Activated B cell treated with CpG ODN at 0.5 μM for 24 hours (primary cell): ENCODE measurements at regions of chrX and their contacts with region 1.

Region 1: GRCh38 chrX:153724252-153725040 is at the starts of genes ABCD1 and BCAP31:
- DNase-seq: peak; percentile 84
- ATAC-seq: peak; percentile 78
- H3K4me3 Mint-ChIP-seq: peak within 1 kb of the TSS; percentile 85
- H3K27ac Mint-ChIP-seq: peak within 1 kb of the TSS; percentile 86
- H3K4me1 Mint-ChIP-seq: peaks cover 48% of the 10 kb centered on the region
- H3K27me3 Mint-ChIP-seq: no peaks in the 10 kb centered on the region
- CTCF ChIP-seq: no peak
- total RNA-seq, gene ABCD1: 2.6 and 2.8 TPM in 2 replicates
- total RNA-seq, gene BCAP31: 90.5 and 90.7 TPM in 2 replicates

Region 2: DNA sequence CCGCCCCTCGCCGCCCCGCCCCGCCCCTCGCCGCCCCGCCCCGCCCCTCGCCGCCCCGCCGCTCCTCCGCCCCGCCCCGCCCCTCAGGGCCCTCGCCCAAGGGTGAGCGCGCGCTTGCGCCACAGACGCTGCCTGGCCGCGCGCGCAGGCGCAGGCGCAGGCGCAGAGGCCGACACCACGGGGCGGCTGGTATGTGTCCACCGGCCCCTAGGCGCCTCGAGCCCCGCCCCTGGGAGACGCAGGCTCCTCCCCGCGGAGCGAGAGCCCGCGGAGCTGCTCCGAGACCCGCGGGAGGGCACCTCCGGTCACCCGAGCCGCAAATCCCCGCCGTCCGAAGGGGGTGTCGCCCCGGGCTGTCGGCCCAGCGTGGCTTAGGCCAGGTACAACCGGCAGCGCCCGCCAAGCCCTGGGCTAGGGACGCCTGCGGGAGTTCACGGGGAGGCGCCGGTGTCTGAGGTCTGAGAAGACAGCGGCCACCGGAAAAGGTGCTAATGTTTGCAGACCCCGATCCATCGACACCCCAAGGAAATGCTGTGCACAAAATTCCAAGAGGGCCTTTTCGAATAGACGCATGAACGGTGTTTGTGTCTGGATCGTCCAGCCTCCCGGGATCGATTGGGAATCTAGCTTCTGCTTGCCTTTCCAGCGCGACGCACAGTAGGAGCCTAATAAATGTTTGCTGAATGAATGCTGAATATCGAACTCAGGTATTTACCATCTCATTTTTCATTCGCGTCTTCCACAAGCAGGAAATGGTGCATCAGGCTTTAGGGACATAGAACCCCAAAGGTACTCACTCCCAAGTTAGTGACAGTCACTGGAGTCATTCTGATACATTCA is 125.0 kb before region 1 on chrX:
- CTCF ChIA-PET with region 1: no interaction called
- POLR2A ChIA-PET with region 1: no interaction called
- intact Hi-C with region 1: loop called (anchors 1 kb)
- DNase-seq: peak; percentile 82
- ATAC-seq: peak; percentile 84
- H3K4me3 Mint-ChIP-seq: peak overlapping the region; percentile 77
- H3K27ac Mint-ChIP-seq: no peak overlapping the region
- H3K4me1 Mint-ChIP-seq: peaks cover 36% of the 10 kb centered on the region
- H3K27me3 Mint-ChIP-seq: no peaks in the 10 kb centered on the region
- CTCF ChIP-seq: no peak

Region 3: GRCh38 chrX:153735274-153735673 is 10.8 kb after region 1 on chrX:
- CTCF ChIA-PET with region 1: no interaction called
- POLR2A ChIA-PET with region 1: interaction called, 3 read pairs
- intact Hi-C with region 1: loop called (anchors 1 kb)
- DNase-seq: no peak
- ATAC-seq: peak; percentile 79
- H3K4me3 Mint-ChIP-seq: no peak overlapping the region
- H3K27ac Mint-ChIP-seq: no peak overlapping the region
- H3K4me1 Mint-ChIP-seq: peaks cover 27% of the 10 kb centered on the region
- H3K27me3 Mint-ChIP-seq: no peaks in the 10 kb centered on the region
- CTCF ChIP-seq: no peak

Region 4: DNA sequence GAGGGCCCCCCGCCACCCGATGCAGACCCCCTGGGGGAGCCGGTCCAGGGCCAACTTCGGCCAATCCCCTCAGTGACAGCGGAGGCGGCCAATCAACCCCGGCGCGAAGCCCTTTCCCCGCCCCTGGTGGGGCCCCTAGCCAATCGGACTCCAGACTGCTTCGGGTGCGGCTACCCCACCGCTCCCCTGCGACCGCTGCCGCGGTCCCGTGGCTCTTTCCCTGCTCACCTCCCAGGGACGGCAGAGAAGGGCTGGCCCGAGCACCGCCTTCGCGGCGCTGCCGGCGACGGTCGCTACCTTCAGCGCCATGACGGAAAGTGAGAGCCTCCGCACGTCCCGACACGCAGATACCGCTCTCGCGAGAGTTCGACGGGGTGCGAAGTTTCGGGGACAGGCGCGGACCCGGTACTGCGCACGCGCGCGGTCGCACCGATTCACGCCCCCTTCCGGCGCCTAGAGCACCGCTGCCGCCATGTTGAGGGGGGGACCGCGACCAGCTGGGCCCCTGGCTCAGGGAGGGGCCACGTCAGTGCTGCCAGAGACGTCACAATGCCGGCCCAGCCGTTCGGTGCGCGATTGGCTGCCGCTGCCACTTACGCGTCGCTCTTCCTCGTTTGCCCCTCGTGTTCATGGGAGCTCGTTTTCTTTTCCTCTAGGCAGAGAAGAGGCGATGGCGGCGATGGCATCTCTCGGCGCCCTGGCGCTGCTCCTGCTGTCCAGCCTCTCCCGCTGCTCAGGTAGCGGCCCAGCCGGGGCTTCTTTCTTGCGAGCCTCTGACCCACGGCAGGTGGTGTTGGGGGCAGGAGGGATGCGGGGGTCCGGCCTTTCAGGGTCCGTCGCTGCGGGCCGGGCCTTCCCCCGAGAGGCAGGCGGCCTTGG is 69.8 kb after region 1 on chrX and contains the starts of genes IDH3G and SSR4:
- CTCF ChIA-PET with region 1: no interaction called
- POLR2A ChIA-PET with region 1: no interaction called
- intact Hi-C with region 1: loop called (anchors 1 kb)
- DNase-seq: peak; percentile 84
- ATAC-seq: peak; percentile 91
- H3K4me3 Mint-ChIP-seq: peak within 1 kb of the TSS; percentile 94
- H3K27ac Mint-ChIP-seq: peak within 1 kb of the TSS; percentile 92
- H3K4me1 Mint-ChIP-seq: peaks cover 19% of the 10 kb centered on the region
- H3K27me3 Mint-ChIP-seq: no peaks in the 10 kb centered on the region
- CTCF ChIP-seq: no peak
- total RNA-seq, gene IDH3G: 58.5 and 60.3 TPM in 2 replicates
- total RNA-seq, gene SSR4: 160 and 175 TPM in 2 replicates

Region 5: DNA sequence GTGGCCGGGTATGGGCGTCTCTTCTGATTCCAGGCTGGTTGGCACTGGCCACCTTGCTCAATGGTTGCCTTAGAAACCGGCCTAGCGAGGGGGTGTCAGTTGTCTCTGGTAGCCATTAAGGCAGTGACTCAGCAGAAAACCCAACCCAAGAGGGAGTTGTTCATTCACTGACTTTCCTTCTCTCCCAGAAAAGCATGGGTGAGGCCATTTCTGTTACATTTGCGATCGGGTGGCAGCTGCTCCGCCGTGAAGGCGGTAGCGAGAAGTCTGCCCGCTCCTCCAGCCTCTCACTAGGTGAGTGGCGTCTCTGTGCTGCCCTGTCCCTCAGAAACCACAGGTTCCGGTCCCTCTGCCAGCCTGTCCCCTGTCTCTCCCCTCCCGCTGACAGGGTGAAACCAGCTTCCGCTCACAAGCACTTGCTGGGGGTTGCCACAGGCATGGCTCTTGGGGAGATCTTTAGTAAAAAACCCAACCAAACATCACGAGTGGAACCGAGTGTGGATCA is 277.8 kb after region 1 on chrX:
- CTCF ChIA-PET with region 1: no interaction called
- POLR2A ChIA-PET with region 1: no interaction called
- intact Hi-C with region 1: no loop called
- DNase-seq: peak; percentile 27
- ATAC-seq: peak; percentile 73
- H3K4me3 Mint-ChIP-seq: peak overlapping the region; percentile 77
- H3K27ac Mint-ChIP-seq: peak overlapping the region; percentile 85
- H3K4me1 Mint-ChIP-seq: peaks cover 49% of the 10 kb centered on the region
- H3K27me3 Mint-ChIP-seq: no peaks in the 10 kb centered on the region
- CTCF ChIP-seq: no peak

Region 6: DNA sequence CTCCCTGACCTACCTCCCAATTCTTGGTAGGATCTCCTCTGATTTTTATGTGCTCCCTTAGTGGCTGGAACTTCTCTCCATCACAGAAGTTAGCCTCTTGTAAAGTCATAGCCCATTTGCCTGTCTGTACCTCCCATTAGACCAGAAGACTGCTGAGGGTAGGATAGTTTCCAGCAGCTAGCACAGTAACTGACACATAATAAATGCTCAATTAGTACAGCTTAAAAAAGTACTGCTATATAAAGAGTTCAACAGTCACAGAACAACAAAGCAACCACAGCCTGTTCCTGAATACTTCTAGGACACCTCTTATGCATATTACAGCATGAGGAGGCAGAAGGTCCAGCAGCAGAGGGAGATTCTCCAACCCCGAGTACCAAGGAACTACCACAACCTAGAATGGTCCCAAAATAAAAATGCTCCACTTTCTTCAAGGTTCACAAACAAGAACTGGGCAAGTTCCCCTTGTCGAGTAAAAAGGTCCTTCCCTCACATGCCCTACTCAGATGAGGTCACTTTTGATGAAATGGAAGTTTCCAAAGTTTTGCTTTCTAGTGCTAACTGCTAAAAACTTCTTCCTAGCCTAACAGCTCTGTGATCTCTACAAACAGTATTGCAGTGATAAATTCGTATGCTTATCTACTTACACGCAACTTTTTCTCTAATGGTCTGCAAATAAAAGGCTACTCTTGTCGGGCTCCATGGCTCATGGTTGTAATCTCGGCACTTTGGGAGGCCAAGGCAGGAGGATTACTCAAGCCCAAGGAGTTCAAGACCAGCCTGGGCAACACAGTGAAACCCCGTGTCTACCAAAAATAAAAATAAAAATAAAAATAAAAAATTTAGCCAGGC is 360.2 kb after region 1 on chrX:
- CTCF ChIA-PET with region 1: no interaction called
- POLR2A ChIA-PET with region 1: no interaction called
- intact Hi-C with region 1: no loop called
- DNase-seq: no peak
- ATAC-seq: no peak
- H3K4me3 Mint-ChIP-seq: no peak overlapping the region
- H3K27ac Mint-ChIP-seq: no peak overlapping the region
- H3K4me1 Mint-ChIP-seq: peaks cover 20% of the 10 kb centered on the region
- H3K27me3 Mint-ChIP-seq: no peaks in the 10 kb centered on the region
- CTCF ChIP-seq: no peak

Region 7: GRCh38 chrX:154097597-154098541 is 373.4 kb after region 1 on chrX and contains the start of gene MECP2:
- CTCF ChIA-PET with region 1: no interaction called
- POLR2A ChIA-PET with region 1: no interaction called
- intact Hi-C with region 1: loop called (anchors 2 kb)
- DNase-seq: peak; percentile 75
- ATAC-seq: peak; percentile 93
- H3K4me3 Mint-ChIP-seq: peak within 1 kb of the TSS; percentile 90
- H3K27ac Mint-ChIP-seq: peak within 1 kb of the TSS; percentile 85
- H3K4me1 Mint-ChIP-seq: peaks cover 39% of the 10 kb centered on the region
- H3K27me3 Mint-ChIP-seq: peaks cover 2% of the 10 kb centered on the region
- CTCF ChIP-seq: no peak
- total RNA-seq, gene MECP2: 56.8 and 69.0 TPM in 2 replicates

Region 8: GRCh38 chrX:154515878-154516655 is 791.6 kb after region 1 on chrX and contains the start of gene FAM3A:
- CTCF ChIA-PET with region 1: no interaction called
- POLR2A ChIA-PET with region 1: no interaction called
- intact Hi-C with region 1: loop called (anchors 1 kb)
- DNase-seq: peak; percentile 87
- ATAC-seq: peak; percentile 97
- H3K4me3 Mint-ChIP-seq: peak within 1 kb of the TSS; percentile 85
- H3K27ac Mint-ChIP-seq: peak within 1 kb of the TSS; percentile 85
- H3K4me1 Mint-ChIP-seq: peaks cover 18% of the 10 kb centered on the region
- H3K27me3 Mint-ChIP-seq: no peaks in the 10 kb centered on the region
- CTCF ChIP-seq: no peak
- total RNA-seq, gene FAM3A: 30.0 and 36.1 TPM in 2 replicates